ENCODE measurements at regions of chr1 and their contacts with region 1.

Region 1: DNA sequence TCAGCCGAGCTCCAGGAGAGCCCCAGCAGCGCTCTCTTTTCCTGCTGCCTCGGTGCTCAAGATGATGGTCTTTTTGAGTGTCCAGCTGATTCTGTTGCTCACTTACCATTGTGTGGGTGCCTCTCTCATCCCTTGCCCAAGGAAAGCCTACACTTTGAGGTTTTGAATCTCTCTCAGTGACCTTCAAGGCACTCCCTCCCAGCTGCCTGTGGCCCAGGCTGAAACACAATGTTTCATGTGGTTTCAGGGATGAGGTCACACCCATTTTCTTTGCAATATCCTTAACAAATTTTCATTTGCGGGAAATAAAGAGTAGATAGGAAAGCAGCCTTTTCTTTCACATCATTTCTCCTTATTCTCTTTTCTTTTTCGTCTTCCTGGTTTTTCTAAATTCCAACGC is 12.6 kb upstream of the MRPS14 start:
- DNase-seq: no peak

Region 2: GRCh38 chr1:175124861-175125260 is 89.0 kb after region 1 on chr1:
- intact Hi-C with region 1: loop called (anchors 2 kb)
- DNase-seq: no peak

Region 3: DNA sequence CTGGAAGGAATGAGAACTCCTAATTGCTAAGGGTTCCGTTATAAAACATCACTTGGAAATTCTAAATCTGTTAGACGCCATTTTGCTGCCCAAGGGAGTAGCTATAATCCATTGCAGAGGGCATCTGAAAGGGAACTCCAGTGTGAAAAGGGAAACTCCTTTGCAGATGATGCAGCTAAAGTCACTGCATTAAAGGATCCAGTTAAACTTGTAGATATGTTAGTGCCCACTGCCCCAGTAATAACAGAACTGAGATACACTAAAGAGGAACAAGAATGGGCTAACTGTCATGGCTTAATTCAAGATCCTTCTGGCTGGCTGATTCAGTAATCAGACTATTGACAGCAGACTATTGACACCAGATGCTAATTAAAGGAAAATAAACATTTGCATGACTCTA is 238.5 kb after region 1 on chr1:
- intact Hi-C with region 1: no loop called
- DNase-seq: no peak

Measured in cardiac septum (tissue), 1 donor.